A549 (cell line): ENCODE measurements at regions of chr1 and their contacts with region 1.

Region 1: DNA sequence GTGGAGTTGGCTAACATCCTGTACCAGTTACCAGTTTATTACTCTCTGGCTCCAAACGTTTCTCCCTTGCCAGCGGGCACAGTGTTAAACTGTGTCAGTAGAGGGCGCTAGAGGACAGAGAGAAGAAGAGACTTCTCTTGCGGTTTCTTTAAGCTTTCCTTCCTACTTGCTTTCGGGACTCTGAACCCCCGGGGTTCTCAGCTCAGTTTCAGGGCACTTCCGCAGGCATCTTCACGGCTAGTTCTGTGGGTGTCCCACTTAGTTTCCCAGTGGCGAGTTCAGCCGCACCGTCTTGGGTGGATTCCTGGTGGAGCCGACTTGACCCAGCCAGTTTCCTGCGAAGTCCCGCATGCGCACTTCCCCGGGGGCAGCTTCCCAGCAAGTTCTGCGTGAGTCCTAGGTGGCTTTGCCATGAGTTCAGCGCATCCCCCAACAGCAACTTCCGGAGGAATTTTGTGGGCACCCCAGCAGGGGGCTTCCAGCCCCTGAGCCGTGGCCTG is 37.9 kb upstream of the BTG2 start:
- DNase-seq: peak; percentile 85 to 89
- ATAC-seq: peak; percentile 76 to 83
- H3K4me3 ChIP-seq: peak overlapping the region; percentile 53
- H3K27ac ChIP-seq: peak overlapping the region; percentile 85 to 91
- H3K4me1 ChIP-seq: peaks cover 7% of the 10 kb centered on the region; the same call in 1 of the 3 replicates
- CTCF ChIP-seq: peak; percentile 95
- EP300 ChIP-seq: no peak
- POLR2A ChIP-seq: peak; percentile 61
- RAD21 ChIP-seq: peak; percentile 77 to 79

Region 2: GRCh38 chr1:203026031-203026989 is 241.1 kb before region 1 on chr1 and contains the start of gene PPFIA4:
- CTCF ChIA-PET with region 1: interaction called, 36 read pairs
- POLR2A ChIA-PET with region 1: interaction called, 3 read pairs
- DNase-seq: peak; percentile 72 to 87
- ATAC-seq: peak; percentile 68 to 90
- H3K4me3 ChIP-seq: peak within 1 kb of the TSS; percentile 58
- H3K27ac ChIP-seq: peak within 1 kb of the TSS; percentile 59 to 84; a peak in 5 of 6 replicates
- H3K4me1 ChIP-seq: no peaks in the 10 kb centered on the region
- CTCF ChIP-seq: no peak
- EP300 ChIP-seq: no peak
- POLR2A ChIP-seq: peak; percentile 37
- RAD21 ChIP-seq: peak; percentile 12 to 24; a peak in 2 of 5 replicates
- polyA plus RNA-seq, gene PPFIA4: 0.47 and 1.0 TPM in 2 replicates

Region 3: GRCh38 chr1:203117611-203118575 is 149.5 kb before region 1 on chr1:
- CTCF ChIA-PET with region 1: interaction called, 72 read pairs
- POLR2A ChIA-PET with region 1: interaction called, 6 read pairs
- DNase-seq: peak; percentile 63 to 93
- ATAC-seq: peak; percentile 91 to 99
- H3K4me3 ChIP-seq: no peak overlapping the region
- H3K27ac ChIP-seq: no peak overlapping the region
- H3K4me1 ChIP-seq: 0 out of 3 replicates have a peak, but pooled peaks cover 4% of the 10 kb centered on the region
- CTCF ChIP-seq: peak; percentile 81
- EP300 ChIP-seq: no peak
- POLR2A ChIP-seq: no peak
- RAD21 ChIP-seq: peak; percentile 87 to 94

Region 4: GRCh38 chr1:203172128-203173010 is 95.0 kb before region 1 on chr1:
- CTCF ChIA-PET with region 1: interaction called, 19 read pairs
- POLR2A ChIA-PET with region 1: no interaction called
- DNase-seq: peak; percentile 67 to 78
- ATAC-seq: peak; percentile 67 to 93
- H3K4me3 ChIP-seq: no peak overlapping the region
- H3K27ac ChIP-seq: no peak overlapping the region
- H3K4me1 ChIP-seq: peaks cover 18% of the 10 kb centered on the region
- CTCF ChIP-seq: peak; percentile 78
- EP300 ChIP-seq: no peak
- POLR2A ChIP-seq: no peak
- RAD21 ChIP-seq: peak; percentile 61 to 68

Region 5: GRCh38 chr1:203239526-203240305 is 27.7 kb before region 1 on chr1:
- CTCF ChIA-PET with region 1: interaction called, 20 read pairs
- POLR2A ChIA-PET with region 1: no interaction called
- DNase-seq: no peak
- ATAC-seq: no peak
- H3K4me3 ChIP-seq: no peak overlapping the region
- H3K27ac ChIP-seq: no peak overlapping the region
- H3K4me1 ChIP-seq: no peaks in the 10 kb centered on the region
- CTCF ChIP-seq: no peak
- EP300 ChIP-seq: no peak
- POLR2A ChIP-seq: no peak
- RAD21 ChIP-seq: no peak

Region 6: GRCh38 chr1:203290261-203291089 is 23.1 kb after region 1 on chr1:
- CTCF ChIA-PET with region 1: interaction called, 175 read pairs
- POLR2A ChIA-PET with region 1: no interaction called
- DNase-seq: no peak
- ATAC-seq: no peak
- H3K4me3 ChIP-seq: no peak overlapping the region
- H3K27ac ChIP-seq: 0 out of 6 replicates have a peak overlapping the region, but pooled peaks of 1 of the 2 experiments have one; percentile 1
- H3K4me1 ChIP-seq: peaks cover 14% of the 10 kb centered on the region
- CTCF ChIP-seq: no peak
- EP300 ChIP-seq: no peak
- POLR2A ChIP-seq: no peak
- RAD21 ChIP-seq: no peak

Region 7: GRCh38 chr1:203422116-203422515 is 154.7 kb after region 1 on chr1:
- CTCF ChIA-PET with region 1: no interaction called
- POLR2A ChIA-PET with region 1: no interaction called
- DNase-seq: no peak
- ATAC-seq: no peak
- H3K4me3 ChIP-seq: no peak overlapping the region
- H3K27ac ChIP-seq: no peak overlapping the region
- H3K4me1 ChIP-seq: peaks cover 13% of the 10 kb centered on the region; the same call in 2 of the 3 replicates
- CTCF ChIP-seq: no peak
- EP300 ChIP-seq: no peak
- POLR2A ChIP-seq: no peak
- RAD21 ChIP-seq: no peak

Region 8: DNA sequence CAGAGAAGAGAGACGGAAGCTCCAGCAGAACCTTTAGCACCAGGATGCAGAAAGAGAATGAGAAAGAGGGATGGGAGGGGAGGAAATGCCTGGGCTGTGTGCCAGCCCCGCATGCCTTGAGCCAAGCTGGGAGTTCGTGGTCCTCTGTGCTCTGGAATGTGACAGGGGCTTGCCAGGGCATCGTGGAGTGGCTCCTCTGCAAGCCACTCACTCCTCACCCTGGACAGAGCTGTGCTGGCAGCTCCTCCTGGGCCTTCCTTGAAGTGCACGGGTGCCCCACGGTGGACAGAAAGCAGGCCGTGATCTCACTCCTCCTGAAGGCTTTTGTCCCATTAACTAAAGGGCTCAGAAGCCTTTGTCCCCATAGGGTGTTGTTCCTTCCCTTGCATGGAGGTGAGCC is 173.4 kb after region 1 on chr1:
- CTCF ChIA-PET with region 1: interaction called, 23 read pairs
- POLR2A ChIA-PET with region 1: no interaction called
- DNase-seq: peak in 1 of 2 experiments; percentile 39
- ATAC-seq: peak; percentile 84 to 90; a peak in 5 of 6 replicates
- H3K4me3 ChIP-seq: no peak overlapping the region
- H3K27ac ChIP-seq: no peak overlapping the region
- H3K4me1 ChIP-seq: no peaks in the 10 kb centered on the region
- CTCF ChIP-seq: peak; percentile 28; the same call in 2 of the 3 replicates
- EP300 ChIP-seq: no peak
- POLR2A ChIP-seq: no peak
- RAD21 ChIP-seq: peak; percentile 59 to 61